ENCODE measurements at regions of chr17 and their contacts with region 1.

Region 1: GRCh38 chr17:51537996-51538550 is 277.7 kb downstream of the UTP18 start:
- DNase-seq: no peak
- H3K4me3 Mint-ChIP-seq: no peak overlapping the region
- H3K27ac Mint-ChIP-seq: no peak overlapping the region
- H3K4me1 Mint-ChIP-seq: peaks cover 8% of the 10 kb centered on the region
- H3K27me3 Mint-ChIP-seq: peaks cover 1% of the 10 kb centered on the region

Region 2: DNA sequence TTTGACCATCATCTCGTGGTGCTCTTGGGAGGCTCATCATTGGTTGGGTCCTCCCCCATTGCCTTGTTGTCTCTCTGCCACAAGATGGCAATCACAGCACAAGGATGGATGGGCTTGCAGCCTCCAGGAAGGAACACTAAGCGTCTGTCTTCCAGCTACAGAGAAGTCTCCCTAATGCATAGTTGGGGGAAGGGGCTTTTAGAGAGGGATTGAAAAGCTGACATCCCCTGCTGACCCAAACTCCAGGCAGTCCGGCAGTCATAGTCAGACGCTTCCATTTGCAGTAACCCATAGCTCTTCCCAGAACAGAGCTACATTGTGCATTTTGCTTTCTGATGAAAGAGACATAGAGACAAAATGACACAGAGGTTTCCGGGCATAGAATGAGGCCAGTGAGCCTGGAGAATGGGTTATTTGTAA is 166.3 kb before region 1 on chr17:
- intact Hi-C with region 1: loop called (anchors 5 kb)
- DNase-seq: peak; percentile 14
- H3K4me3 Mint-ChIP-seq: no peak overlapping the region
- H3K27ac Mint-ChIP-seq: no peak overlapping the region
- H3K4me1 Mint-ChIP-seq: no peaks in the 10 kb centered on the region
- H3K27me3 Mint-ChIP-seq: peaks cover 5% of the 10 kb centered on the region

Measured in activated T-helper 2 cell treated with anti-CD3 and anti-CD28 coated beads, Interferon-gamma antibody, Interleukin-2, Interleukin-4, amounts not matched to agents 10 μg/mL and 5 μg/mL and 100 μg/mL, durations not matched to agents 14 hours and 24 hours and 36 hours (primary cell).